ENCODE measurements at regions of chr17 and their contacts with region 1.

Region 1: DNA sequence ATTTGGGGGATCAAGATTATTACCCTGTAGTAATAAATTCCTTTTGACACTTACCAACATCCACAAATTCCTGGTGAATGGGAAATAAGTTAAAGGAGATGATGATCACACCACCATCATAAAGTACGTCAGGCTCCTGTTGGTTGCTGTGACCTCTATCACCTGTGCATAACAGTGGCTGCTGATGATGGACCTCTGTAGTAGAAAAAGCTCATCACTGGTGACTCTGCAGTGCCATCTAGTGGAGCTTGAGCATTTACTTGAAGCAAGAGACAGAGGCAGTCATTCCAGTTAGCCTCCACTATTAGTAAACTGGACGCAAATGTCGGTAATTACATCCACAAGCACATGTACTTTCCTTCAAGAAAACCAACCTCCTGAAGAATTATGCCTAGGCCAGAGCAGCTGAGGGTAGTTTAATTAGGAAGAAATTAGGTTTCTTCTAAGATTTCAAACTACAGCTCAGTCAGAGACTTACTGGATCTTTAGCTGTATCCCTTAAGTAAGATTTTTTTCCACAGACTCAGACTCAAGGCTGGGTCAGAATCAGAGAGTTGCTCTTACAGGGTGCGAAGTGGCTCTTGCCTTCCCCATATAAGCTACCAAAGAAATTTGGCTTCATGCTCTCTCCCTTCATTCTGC is 39.3 kb downstream of the CYB561 start:
- DNase-seq: peak; percentile 88
- H3K4me3 Mint-ChIP-seq: no peak overlapping the region
- H3K27ac Mint-ChIP-seq: no peak overlapping the region
- H3K4me1 Mint-ChIP-seq: peaks cover 2% of the 10 kb centered on the region
- H3K27me3 Mint-ChIP-seq: no peaks in the 10 kb centered on the region

Region 2: DNA sequence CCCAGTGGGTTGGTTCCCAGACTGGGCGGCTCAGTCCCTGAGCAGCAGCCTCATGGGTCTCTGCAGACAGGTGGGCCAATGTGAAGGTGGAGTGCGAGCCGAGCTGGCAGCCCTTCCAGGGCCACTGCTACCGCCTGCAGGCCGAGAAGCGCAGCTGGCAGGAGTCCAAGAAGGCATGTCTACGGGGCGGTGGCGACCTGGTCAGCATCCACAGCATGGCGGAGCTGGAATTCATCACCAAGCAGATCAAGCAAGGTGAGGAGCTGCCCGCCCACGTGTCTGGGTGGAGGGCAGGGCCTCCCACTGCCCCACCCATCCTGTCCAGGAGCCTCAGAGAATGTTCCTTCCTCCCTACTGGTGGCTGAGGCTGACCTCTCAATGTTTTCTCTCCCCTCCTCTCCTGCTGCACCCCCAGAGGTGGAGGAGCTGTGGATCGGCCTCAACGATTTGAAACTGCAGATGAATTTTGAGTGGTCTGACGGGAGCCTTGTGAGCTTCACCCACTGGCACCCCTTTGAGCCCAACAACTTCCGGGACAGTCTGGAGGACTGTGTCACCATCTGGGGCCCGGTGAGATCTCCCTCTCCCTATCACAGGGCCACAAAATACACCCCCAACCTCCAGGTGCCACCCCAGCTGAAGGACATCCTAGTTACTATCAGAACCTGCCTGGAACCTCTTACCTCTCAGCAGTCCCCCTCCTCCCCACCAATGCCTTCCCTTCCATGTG is 735.1 kb before region 1 on chr17:
- CTCF ChIA-PET with region 1: interaction called, 12 read pairs
- intact Hi-C with region 1: loop called (anchors 1 kb)
- DNase-seq: no peak
- H3K4me3 Mint-ChIP-seq: no peak overlapping the region
- H3K27ac Mint-ChIP-seq: no peak overlapping the region
- H3K4me1 Mint-ChIP-seq: peaks cover 3% of the 10 kb centered on the region
- H3K27me3 Mint-ChIP-seq: no peaks in the 10 kb centered on the region

Region 3: GRCh38 chr17:62703775-62704378 is 702.9 kb before region 1 on chr17:
- CTCF ChIA-PET with region 1: no interaction called
- intact Hi-C with region 1: loop called (anchors 1 kb)
- DNase-seq: peak; percentile 71
- H3K4me3 Mint-ChIP-seq: peak overlapping the region; percentile 34
- H3K27ac Mint-ChIP-seq: no peak overlapping the region
- H3K4me1 Mint-ChIP-seq: peaks cover 4% of the 10 kb centered on the region
- H3K27me3 Mint-ChIP-seq: peaks cover 34% of the 10 kb centered on the region

Region 4: DNA sequence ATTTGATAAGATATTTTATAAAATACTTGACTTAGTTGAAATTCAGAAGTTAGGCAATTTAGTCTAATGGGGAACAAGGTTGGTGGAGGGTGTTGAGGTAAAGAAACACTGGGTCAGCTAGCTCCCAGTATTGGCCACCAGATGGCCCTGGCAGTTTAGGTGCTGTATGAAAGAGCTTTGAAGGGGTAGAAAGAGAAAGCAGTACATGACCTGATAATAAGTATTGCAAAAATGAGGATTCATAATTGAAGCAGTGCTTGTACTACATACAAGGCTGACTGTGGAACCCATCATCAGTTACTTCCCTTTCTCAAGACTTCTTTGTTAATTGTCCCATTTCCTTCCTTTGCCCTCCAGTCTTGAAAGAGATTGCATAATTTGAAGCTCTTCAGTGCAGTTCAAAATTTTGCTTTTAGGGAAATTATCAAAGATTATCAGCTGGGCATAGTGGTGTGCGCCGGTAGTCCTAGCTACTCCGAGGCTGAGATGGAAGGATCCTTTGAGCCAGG is 411.4 kb before region 1 on chr17:
- CTCF ChIA-PET with region 1: interaction called, 22 read pairs
- intact Hi-C with region 1: loop called (anchors 1 kb)
- DNase-seq: peak; percentile 62
- H3K4me3 Mint-ChIP-seq: no peak overlapping the region
- H3K27ac Mint-ChIP-seq: no peak overlapping the region
- H3K4me1 Mint-ChIP-seq: peaks cover 11% of the 10 kb centered on the region
- H3K27me3 Mint-ChIP-seq: no peaks in the 10 kb centered on the region

Region 5: GRCh38 chr17:63082273-63082993 is 324.4 kb before region 1 on chr17:
- CTCF ChIA-PET with region 1: interaction called, 22 read pairs
- intact Hi-C with region 1: loop called (anchors 1 kb)
- DNase-seq: no peak
- H3K4me3 Mint-ChIP-seq: no peak overlapping the region
- H3K27ac Mint-ChIP-seq: no peak overlapping the region
- H3K4me1 Mint-ChIP-seq: no peaks in the 10 kb centered on the region
- H3K27me3 Mint-ChIP-seq: no peaks in the 10 kb centered on the region

Region 6: GRCh38 chr17:63419949-63420867 is 13.4 kb after region 1 on chr17:
- CTCF ChIA-PET with region 1: interaction called, 14 read pairs
- intact Hi-C with region 1: no loop called
- DNase-seq: peak; percentile 62
- H3K4me3 Mint-ChIP-seq: no peak overlapping the region
- H3K27ac Mint-ChIP-seq: peak overlapping the region; percentile 27
- H3K4me1 Mint-ChIP-seq: peaks cover 13% of the 10 kb centered on the region
- H3K27me3 Mint-ChIP-seq: no peaks in the 10 kb centered on the region

Measured in activated naive CD4-positive, alpha-beta T cell treated with anti-CD3 and anti-CD28 coated beads for 36 hours (primary cell).